ENCODE measurements at regions of chr14 and their contacts with region 1.

Region 1: DNA sequence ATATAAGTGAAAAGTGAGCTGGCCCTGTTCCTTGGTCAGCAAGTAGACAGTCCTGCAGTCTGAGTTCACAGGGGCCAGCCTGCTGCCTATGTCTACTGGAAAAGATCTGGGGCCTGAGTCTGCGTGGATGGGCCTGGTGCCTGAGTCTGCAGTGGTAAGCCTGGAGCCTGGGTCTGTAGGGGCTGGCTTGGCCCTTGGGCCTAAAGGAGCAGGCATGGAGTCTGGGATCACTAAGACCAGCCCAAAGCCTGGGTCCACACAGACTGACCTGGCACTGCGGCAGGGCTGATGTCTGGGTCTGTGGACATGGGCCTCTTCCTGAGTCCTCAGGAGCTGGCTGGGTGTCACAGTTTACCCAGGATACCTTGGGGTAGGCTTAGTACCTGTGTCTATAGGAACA is 95.4 kb downstream of the KLHL28 start:
- DNase-seq: no peak
- ATAC-seq: no peak
- H3K4me3 Mint-ChIP-seq: no peak overlapping the region
- H3K27ac Mint-ChIP-seq: no peak overlapping the region
- H3K4me1 Mint-ChIP-seq: no peaks in the 10 kb centered on the region
- H3K27me3 Mint-ChIP-seq: no peaks in the 10 kb centered on the region
- CTCF ChIP-seq: no peak

Region 2: GRCh38 chr14:44803239-44803905 is 63.0 kb before region 1 on chr14:
- CTCF ChIA-PET with region 1: no interaction called
- POLR2A ChIA-PET with region 1: no interaction called
- intact Hi-C with region 1: no loop called
- DNase-seq: no peak
- ATAC-seq: peak; percentile 66
- H3K4me3 Mint-ChIP-seq: no peak overlapping the region
- H3K27ac Mint-ChIP-seq: no peak overlapping the region
- H3K4me1 Mint-ChIP-seq: no peaks in the 10 kb centered on the region
- H3K27me3 Mint-ChIP-seq: peaks cover 11% of the 10 kb centered on the region
- CTCF ChIP-seq: peak; percentile 68

Region 3: GRCh38 chr14:44846232-44846824 is 20.0 kb before region 1 on chr14:
- CTCF ChIA-PET with region 1: interaction called, 12 read pairs
- POLR2A ChIA-PET with region 1: interaction called, 3 read pairs
- intact Hi-C with region 1: no loop called
- DNase-seq: peak; percentile 4
- ATAC-seq: peak; percentile 69
- H3K4me3 Mint-ChIP-seq: no peak overlapping the region
- H3K27ac Mint-ChIP-seq: no peak overlapping the region
- H3K4me1 Mint-ChIP-seq: no peaks in the 10 kb centered on the region
- H3K27me3 Mint-ChIP-seq: peaks cover 5% of the 10 kb centered on the region
- CTCF ChIP-seq: peak; percentile 84